ENCODE measurements at regions of chr1 and their contacts with region 1.

Region 1: GRCh38 chr1:33446590-33446989 is 15.7 kb upstream of the PHC2 start:
- DNase-seq: no peak
- ATAC-seq: no peak
- H3K4me3 ChIP-seq: no peak overlapping the region
- H3K27ac ChIP-seq: no peak overlapping the region
- H3K4me1 ChIP-seq: no peaks in the 10 kb centered on the region
- H3K27me3 ChIP-seq: 0 out of 2 replicates have a peak, but pooled peaks cover 3% of the 10 kb centered on the region
- CTCF ChIP-seq: no peak

Region 2: GRCh38 chr1:33030575-33030974 is 416.0 kb before region 1 on chr1:
- CTCF ChIA-PET with region 1: no interaction called
- POLR2A ChIA-PET with region 1: no interaction called
- in situ Hi-C with region 1: no loop called
- intact Hi-C with region 1: no loop called
- DNase-seq: no peak
- ATAC-seq: no peak
- H3K4me3 ChIP-seq: no peak overlapping the region
- H3K27ac ChIP-seq: no peak overlapping the region
- H3K4me1 ChIP-seq: peaks cover 11% of the 10 kb centered on the region
- H3K27me3 ChIP-seq: no peaks in the 10 kb centered on the region
- CTCF ChIP-seq: no peak

Region 3: DNA sequence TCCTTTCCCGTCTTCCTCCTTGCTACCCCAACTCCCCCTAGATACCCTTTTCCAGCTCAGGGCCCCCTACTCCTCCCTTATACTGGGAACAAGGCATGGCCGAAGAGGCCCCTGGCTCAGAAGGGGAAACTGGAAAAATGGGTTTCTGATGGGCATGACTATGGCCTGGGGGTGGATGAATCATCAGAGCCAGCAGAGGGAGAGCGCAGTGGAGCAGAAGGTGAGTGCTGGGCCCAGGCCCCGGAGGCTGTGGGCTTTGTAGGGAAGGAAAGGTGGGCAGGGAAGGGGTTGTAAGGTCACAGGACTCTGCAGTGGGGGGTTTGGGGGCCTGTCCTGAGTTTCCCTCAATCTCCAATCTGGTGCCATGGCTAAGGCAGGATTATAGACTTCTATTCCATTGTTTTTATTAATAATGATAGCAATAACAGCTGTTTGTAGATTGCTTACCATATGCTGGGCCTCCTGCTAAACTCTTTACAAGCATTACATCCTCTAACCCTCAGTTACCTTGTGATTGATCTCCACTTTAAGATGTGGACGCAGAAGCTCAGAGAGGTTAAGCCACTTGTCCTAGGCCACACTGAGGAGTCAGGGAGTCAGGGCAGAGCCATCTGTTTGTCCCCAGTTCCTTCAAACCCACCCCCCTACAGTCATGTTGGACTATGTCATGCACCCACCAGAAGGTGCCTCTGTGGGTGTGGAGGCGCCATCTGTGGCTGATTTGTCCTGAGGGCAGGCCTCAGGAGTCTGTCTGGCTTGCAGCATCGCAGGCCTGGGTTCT is 226.5 kb before region 1 on chr1:
- CTCF ChIA-PET with region 1: no interaction called
- POLR2A ChIA-PET with region 1: no interaction called
- in situ Hi-C with region 1: no loop called
- intact Hi-C with region 1: loop called (anchors 5 kb)
- DNase-seq: no peak
- ATAC-seq: peak; percentile 70
- H3K4me3 ChIP-seq: no peak overlapping the region
- H3K27ac ChIP-seq: no peak overlapping the region
- H3K4me1 ChIP-seq: no peaks in the 10 kb centered on the region; the same call in 1 of the 2 replicates
- H3K27me3 ChIP-seq: no peaks in the 10 kb centered on the region
- CTCF ChIP-seq: no peak

Region 4: GRCh38 chr1:33384040-33384812 is 62.4 kb before region 1 on chr1:
- CTCF ChIA-PET with region 1: no interaction called
- POLR2A ChIA-PET with region 1: no interaction called
- in situ Hi-C with region 1: no loop called
- intact Hi-C with region 1: no loop called
- DNase-seq: no peak
- ATAC-seq: no peak
- H3K4me3 ChIP-seq: no peak overlapping the region
- H3K27ac ChIP-seq: no peak overlapping the region
- H3K4me1 ChIP-seq: no peaks in the 10 kb centered on the region
- H3K27me3 ChIP-seq: no peaks in the 10 kb centered on the region
- CTCF ChIP-seq: no peak

Region 5: DNA sequence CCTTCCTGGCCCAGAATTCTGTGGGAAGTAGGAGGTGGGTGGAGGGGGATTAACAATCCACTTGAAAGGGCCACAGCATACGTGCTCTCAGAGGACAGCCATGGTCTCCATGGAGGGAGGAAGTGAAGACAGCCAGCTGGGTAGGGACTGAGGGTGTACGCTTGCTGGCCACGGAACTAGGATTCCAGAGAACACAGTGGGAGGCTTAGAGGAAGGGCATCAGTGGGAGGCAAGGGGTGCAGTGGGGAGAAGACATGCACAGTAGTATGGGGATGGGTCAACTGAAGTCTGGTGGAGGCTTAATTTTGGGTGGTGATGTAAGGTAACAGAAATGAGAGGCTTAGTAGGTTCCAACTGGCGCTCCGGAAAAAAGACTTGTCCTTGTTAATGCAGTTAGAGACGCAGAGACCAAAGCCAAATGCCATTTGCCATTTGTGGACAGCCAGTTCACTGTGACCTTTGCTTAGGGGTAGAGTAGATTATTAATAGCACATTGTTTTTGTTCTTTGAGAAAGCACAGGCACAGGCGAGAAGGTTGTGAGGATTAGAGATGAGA is 128.8 kb after region 1 on chr1:
- CTCF ChIA-PET with region 1: no interaction called
- POLR2A ChIA-PET with region 1: no interaction called
- in situ Hi-C with region 1: no loop called
- intact Hi-C with region 1: no loop called
- DNase-seq: no peak
- ATAC-seq: no peak
- H3K4me3 ChIP-seq: no peak overlapping the region
- H3K27ac ChIP-seq: no peak overlapping the region
- H3K4me1 ChIP-seq: no peaks in the 10 kb centered on the region
- H3K27me3 ChIP-seq: peaks cover 19% of the 10 kb centered on the region
- CTCF ChIP-seq: no peak